ENCODE measurements at regions of chr16 and their contacts with region 1.

Region 1: GRCh38 chr16:65274566-65274965 is 152.7 kb upstream of the CDH11 start:
- DNase-seq: peak; percentile 83
- ATAC-seq: peak; percentile 98
- H3K4me3 ChIP-seq: no peak overlapping the region
- H3K27ac ChIP-seq: peak overlapping the region; percentile 95
- H3K4me1 ChIP-seq: peaks cover 20% of the 10 kb centered on the region
- H3K27me3 ChIP-seq: no peaks in the 10 kb centered on the region
- CTCF ChIP-seq: no peak

Region 2: GRCh38 chr16:65185241-65185778 is 89.3 kb before region 1 on chr16:
- CTCF ChIA-PET with region 1: no interaction called
- POLR2A ChIA-PET with region 1: no interaction called
- intact Hi-C with region 1: no loop called
- DNase-seq: no peak
- ATAC-seq: no peak
- H3K4me3 ChIP-seq: no peak overlapping the region
- H3K27ac ChIP-seq: no peak overlapping the region
- H3K4me1 ChIP-seq: no peaks in the 10 kb centered on the region
- H3K27me3 ChIP-seq: no peaks in the 10 kb centered on the region
- CTCF ChIP-seq: no peak

Region 3: DNA sequence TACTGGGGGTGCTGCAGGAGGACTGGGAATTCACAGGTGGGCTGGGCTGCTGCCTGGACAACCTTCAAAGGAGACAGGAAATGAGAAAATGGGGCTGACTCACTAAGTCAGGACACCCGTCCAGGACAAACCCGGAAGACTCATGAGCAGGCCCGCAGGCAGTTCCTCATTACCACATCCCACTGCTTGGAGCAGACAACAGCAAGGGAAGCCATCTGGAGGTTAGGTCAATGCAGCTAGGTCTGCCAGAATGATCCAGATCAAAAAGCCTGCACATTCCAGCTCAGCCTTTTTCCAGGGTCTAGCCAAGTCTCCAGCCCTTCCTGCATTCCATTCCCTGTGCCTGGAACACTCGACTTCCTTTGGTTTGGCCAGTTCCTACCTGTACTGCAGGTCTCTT is 383.8 kb after region 1 on chr16:
- CTCF ChIA-PET with region 1: no interaction called
- POLR2A ChIA-PET with region 1: no interaction called
- intact Hi-C with region 1: loop called (anchors 2 kb)
- DNase-seq: peak; percentile 92
- ATAC-seq: peak; percentile 80
- H3K4me3 ChIP-seq: peak overlapping the region; percentile 51
- H3K27ac ChIP-seq: peak overlapping the region; percentile 99
- H3K4me1 ChIP-seq: peaks cover 43% of the 10 kb centered on the region
- H3K27me3 ChIP-seq: no peaks in the 10 kb centered on the region
- CTCF ChIP-seq: no peak

Region 4: DNA sequence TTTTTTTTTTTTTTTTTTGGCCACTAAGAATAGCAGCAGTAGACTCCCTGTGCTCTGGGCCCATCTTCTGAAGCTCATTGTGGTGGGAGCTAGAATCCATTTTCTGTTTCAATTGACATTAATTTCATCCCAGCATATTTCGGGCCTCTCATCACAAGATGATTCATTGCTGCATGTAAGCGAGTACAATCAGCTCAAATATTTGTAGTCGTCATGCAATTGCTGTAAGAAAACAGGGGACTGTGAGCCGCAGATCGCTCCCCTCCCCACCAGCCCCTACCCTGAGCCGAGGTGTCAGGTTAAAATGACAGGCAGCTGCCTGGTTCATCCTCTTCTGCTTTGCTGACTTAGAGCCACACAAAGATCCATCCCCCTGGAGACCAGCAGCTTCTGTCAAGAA is 733.2 kb after region 1 on chr16:
- CTCF ChIA-PET with region 1: no interaction called
- POLR2A ChIA-PET with region 1: no interaction called
- intact Hi-C with region 1: loop called (anchors 10 kb)
- DNase-seq: peak; percentile 71
- ATAC-seq: peak; percentile 66
- H3K4me3 ChIP-seq: 0 out of 2 replicates have a peak overlapping the region, but pooled peaks have one; percentile 17
- H3K27ac ChIP-seq: no peak overlapping the region; the same call in 1 of the 2 replicates
- H3K4me1 ChIP-seq: peaks cover 22% of the 10 kb centered on the region
- H3K27me3 ChIP-seq: no peaks in the 10 kb centered on the region
- CTCF ChIP-seq: no peak

Measured in PC-3 (cell line).